H1 (cell line): ENCODE measurements at regions of chr9 and their contacts with region 1.

Region 1: DNA sequence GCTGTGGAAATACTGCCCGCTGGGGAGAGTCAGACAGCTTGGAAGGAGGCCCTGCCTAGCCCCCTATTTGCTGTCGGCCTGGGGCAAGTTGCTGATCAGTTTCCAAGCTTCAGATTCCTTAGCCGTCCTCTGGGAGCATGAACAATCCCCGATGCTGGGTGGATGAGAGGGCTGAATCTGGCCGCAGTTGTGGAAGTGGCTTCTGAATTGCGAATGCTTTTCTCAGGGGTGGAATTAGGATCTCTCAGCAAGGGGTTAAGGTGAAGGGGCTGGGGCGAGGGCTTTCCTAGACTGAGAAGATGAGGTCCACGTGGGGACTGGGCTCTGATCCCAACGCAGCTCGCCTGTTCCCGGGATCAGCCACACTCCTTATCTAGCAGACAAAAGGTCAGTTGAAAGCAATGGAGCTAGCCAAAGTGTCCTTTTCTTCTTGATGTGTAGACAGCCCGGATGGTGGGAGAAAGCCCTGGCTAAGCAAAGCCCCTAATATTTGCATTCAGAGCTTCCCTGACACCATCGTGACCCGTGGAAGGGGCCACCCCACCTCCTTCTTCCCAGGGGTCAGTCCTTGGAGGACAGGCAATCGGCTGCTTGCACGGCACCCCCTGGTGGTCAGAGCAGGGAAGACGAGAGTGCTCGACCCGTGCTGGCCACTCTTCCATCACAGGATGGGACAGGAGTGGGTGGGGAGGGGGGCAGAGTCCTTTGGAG is 54.9 kb downstream of the COL15A1 start:
- DNase-seq: peak; percentile 58 to 97
- H3K4me3 ChIP-seq: no peak overlapping the region
- H3K27ac ChIP-seq: no peak overlapping the region
- H3K4me1 ChIP-seq: peaks cover 0 to 4% (median under 1%) of the 10 kb centered on the region in 4 experiments; a peak in 2 of 7 replicates
- H3K27me3 ChIP-seq: no peaks in the 10 kb centered on the region; a peak in 1 of 7 replicates
- CTCF ChIP-seq: peak; percentile 81 to 98 (median 92)
- EP300 ChIP-seq: no peak
- POLR2A ChIP-seq: no peak
- RAD21 ChIP-seq: peak; percentile 79 to 87

Region 2: GRCh38 chr9:98848450-98849149 is 150.0 kb before region 1 on chr9:
- CTCF ChIA-PET with region 1: interaction called, 116 read pairs
- POLR2A ChIA-PET with region 1: interaction called, 3 read pairs
- DNase-seq: peak; percentile 83 to 91
- H3K4me3 ChIP-seq: no peak overlapping the region
- H3K27ac ChIP-seq: no peak overlapping the region
- H3K4me1 ChIP-seq: peaks cover 0 to 5% (median 2%) of the 10 kb centered on the region in 4 experiments; a peak in 3 of 7 replicates
- H3K27me3 ChIP-seq: no peaks in the 10 kb centered on the region
- CTCF ChIP-seq: peak; percentile 86 to 96 (median 96)
- EP300 ChIP-seq: no peak
- POLR2A ChIP-seq: no peak
- RAD21 ChIP-seq: peak; percentile 95 to 98

Region 3: DNA sequence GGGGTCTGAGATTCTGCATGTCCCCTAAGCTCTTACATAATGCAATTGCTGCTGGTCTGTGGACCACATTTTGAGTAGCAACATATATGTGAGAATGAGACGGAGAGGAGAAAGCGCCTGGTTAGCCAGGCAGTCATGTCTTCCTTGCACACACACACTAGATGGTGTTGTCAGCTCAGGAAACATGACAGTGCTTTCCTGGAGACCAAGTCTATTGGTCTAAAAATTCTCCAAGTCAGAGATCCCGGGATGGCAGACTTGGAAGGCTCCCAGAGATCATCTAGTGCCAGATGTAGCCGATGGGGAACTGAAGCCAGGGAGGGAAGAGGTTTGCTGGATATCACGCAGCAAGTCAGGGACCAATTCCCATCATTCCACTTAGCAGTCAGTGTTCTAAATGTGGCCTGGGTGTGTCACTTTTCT is 137.7 kb before region 1 on chr9:
- CTCF ChIA-PET with region 1: interaction called, 28 read pairs
- POLR2A ChIA-PET with region 1: no interaction called
- DNase-seq: no peak
- H3K4me3 ChIP-seq: no peak overlapping the region
- H3K27ac ChIP-seq: no peak overlapping the region
- H3K4me1 ChIP-seq: no peaks in the 10 kb centered on the region
- H3K27me3 ChIP-seq: no peaks in the 10 kb centered on the region
- CTCF ChIP-seq: peak in 2 of 3 experiments; percentile 20 to 37; a peak in 2 of 4 replicates
- EP300 ChIP-seq: no peak
- POLR2A ChIP-seq: no peak
- RAD21 ChIP-seq: peak; percentile 68 to 73

Region 4: GRCh38 chr9:98892288-98892687 is 106.3 kb before region 1 on chr9:
- CTCF ChIA-PET with region 1: interaction called, 12 read pairs
- POLR2A ChIA-PET with region 1: no interaction called
- DNase-seq: no peak
- H3K4me3 ChIP-seq: no peak overlapping the region
- H3K27ac ChIP-seq: no peak overlapping the region
- H3K4me1 ChIP-seq: no peaks in the 10 kb centered on the region
- H3K27me3 ChIP-seq: no peaks in the 10 kb centered on the region
- CTCF ChIP-seq: no peak
- EP300 ChIP-seq: no peak
- POLR2A ChIP-seq: no peak
- RAD21 ChIP-seq: no peak

Region 5: DNA sequence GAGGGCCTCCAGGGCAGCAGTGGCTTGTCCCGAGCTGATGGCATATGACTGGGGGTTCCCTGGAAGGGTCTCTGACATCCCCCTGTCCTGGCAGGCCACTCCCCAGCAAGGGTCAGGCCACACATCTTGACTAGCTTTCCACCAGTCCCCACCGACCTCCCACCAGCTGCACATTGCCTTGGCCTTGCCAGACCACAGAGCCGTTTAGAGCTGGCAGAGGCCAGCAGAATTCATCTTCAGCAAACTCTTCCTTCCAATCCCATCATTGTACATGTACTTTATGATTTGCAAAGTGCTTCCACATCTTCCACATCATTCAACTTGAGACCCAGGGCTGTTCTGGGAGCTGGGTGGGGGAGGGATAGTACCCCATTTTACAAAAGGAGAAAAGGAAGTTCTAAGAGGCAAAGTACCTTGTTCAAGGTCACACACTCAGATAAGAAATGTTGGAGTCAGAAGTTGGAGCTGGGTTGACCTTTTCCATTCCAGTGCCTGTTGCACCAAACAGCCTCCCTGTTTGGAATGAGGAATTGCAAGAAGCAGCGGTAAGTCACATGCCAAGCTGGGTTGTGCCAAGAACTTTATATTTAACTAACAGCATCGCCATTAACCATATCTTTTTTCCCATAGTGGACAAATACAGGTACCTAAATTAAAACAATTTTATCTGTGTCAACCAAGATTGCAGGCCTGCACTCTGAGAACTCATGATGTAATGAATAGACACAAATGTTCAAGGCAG is 80.7 kb before region 1 on chr9:
- CTCF ChIA-PET with region 1: interaction called, 12 read pairs
- POLR2A ChIA-PET with region 1: no interaction called
- DNase-seq: no peak
- H3K4me3 ChIP-seq: no peak overlapping the region
- H3K27ac ChIP-seq: no peak overlapping the region
- H3K4me1 ChIP-seq: peaks cover 0 to 3% (median 2%) of the 10 kb centered on the region in 4 experiments; a peak in 4 of 7 replicates
- H3K27me3 ChIP-seq: no peaks in the 10 kb centered on the region
- CTCF ChIP-seq: no peak
- EP300 ChIP-seq: no peak
- POLR2A ChIP-seq: no peak
- RAD21 ChIP-seq: no peak